A673 (cell line): ENCODE measurements at regions of chr7 and their contacts with region 1.

Region 1: GRCh38 chr7:84139986-84140729 is 54.4 kb downstream of the SEMA3A start:
- DNase-seq: peak; percentile 45
- H3K4me3 ChIP-seq: no peak overlapping the region
- H3K27ac ChIP-seq: peak overlapping the region; percentile 94
- H3K4me1 ChIP-seq: peaks cover 72% of the 10 kb centered on the region
- H3K27me3 ChIP-seq: no peaks in the 10 kb centered on the region
- CTCF ChIP-seq: no peak

Region 2: GRCh38 chr7:83976295-83976694 is 163.9 kb before region 1 on chr7:
- CTCF ChIA-PET with region 1: no interaction called
- POLR2A ChIA-PET with region 1: no interaction called
- intact Hi-C with region 1: loop called (anchors 1 kb)
- DNase-seq: peak; percentile 80
- H3K4me3 ChIP-seq: no peak overlapping the region
- H3K27ac ChIP-seq: no peak overlapping the region
- H3K4me1 ChIP-seq: peaks cover 33% of the 10 kb centered on the region
- H3K27me3 ChIP-seq: no peaks in the 10 kb centered on the region
- CTCF ChIP-seq: peak; percentile 73

Region 3: DNA sequence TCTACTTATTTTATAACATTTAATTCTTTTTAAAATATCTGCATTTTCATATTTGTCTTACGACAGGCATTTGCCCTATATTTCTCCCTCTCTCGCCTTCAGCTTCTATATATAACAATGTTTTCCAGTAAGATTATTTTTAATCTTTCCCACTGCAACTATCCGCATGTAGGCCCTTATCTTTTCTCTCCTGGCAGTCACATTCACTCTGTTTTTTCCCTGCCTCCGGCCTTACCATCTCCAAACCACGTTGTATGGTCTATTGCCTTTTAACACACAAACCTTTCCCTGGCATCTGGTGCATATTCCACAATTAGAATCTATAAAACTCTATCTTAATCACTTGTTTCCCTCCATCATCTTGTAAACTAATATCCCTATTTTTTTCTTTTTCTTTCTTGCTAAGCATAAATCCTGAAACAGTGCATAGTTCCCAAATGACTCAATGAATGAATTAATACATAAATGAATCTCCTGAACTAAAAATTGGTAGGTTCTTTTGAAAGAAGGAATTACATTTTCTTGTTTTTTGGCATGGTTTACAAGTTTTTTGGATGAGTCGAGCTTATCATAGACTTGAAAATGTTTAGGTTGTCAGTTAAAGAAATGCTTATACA is 118.8 kb before region 1 on chr7:
- CTCF ChIA-PET with region 1: no interaction called
- POLR2A ChIA-PET with region 1: no interaction called
- intact Hi-C with region 1: no loop called
- DNase-seq: no peak
- H3K4me3 ChIP-seq: no peak overlapping the region
- H3K27ac ChIP-seq: peak overlapping the region; percentile 15
- H3K4me1 ChIP-seq: peaks cover 22% of the 10 kb centered on the region
- H3K27me3 ChIP-seq: no peaks in the 10 kb centered on the region
- CTCF ChIP-seq: no peak

Region 4: DNA sequence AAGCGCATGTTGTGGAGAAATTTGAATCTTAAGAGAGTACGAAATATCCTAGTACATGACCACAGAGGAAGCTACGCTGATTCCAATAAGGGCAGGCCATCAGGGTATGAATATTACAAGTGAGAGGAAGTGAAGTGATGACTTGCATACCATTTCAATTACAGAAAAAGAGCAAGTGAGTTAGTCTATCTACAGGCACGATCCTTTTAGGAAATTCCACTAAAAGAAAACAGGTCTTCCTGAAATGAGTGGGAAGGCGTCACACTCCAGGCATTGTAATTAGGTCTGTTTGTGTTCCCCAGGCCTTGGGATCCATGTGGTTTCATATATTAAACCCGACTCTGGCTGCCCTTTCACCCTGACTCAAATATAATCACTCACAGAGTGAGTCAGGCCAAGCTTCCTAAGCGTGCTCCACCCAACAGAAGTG is 98.0 kb before region 1 on chr7:
- CTCF ChIA-PET with region 1: no interaction called
- POLR2A ChIA-PET with region 1: interaction called, 4 read pairs
- intact Hi-C with region 1: loop called (anchors 10 kb)
- DNase-seq: peak; percentile 90
- H3K4me3 ChIP-seq: peak overlapping the region; percentile 2
- H3K27ac ChIP-seq: peak overlapping the region; percentile 84
- H3K4me1 ChIP-seq: peaks cover 68% of the 10 kb centered on the region
- H3K27me3 ChIP-seq: no peaks in the 10 kb centered on the region
- CTCF ChIP-seq: no peak

Region 5: GRCh38 chr7:84070770-84071169 is 69.4 kb before region 1 on chr7:
- CTCF ChIA-PET with region 1: no interaction called
- POLR2A ChIA-PET with region 1: no interaction called
- intact Hi-C with region 1: loop called (anchors 2 kb)
- DNase-seq: peak; percentile 81
- H3K4me3 ChIP-seq: no peak overlapping the region
- H3K27ac ChIP-seq: peak overlapping the region; percentile 88
- H3K4me1 ChIP-seq: peaks cover 59% of the 10 kb centered on the region
- H3K27me3 ChIP-seq: no peaks in the 10 kb centered on the region
- CTCF ChIP-seq: no peak

Region 6: GRCh38 chr7:84092207-84092606 is 48.0 kb before region 1 on chr7:
- CTCF ChIA-PET with region 1: no interaction called
- POLR2A ChIA-PET with region 1: interaction called, 10 read pairs
- intact Hi-C with region 1: no loop called
- DNase-seq: peak; percentile 86
- H3K4me3 ChIP-seq: peak overlapping the region; percentile 9
- H3K27ac ChIP-seq: peak overlapping the region; percentile 71
- H3K4me1 ChIP-seq: peaks cover 42% of the 10 kb centered on the region
- H3K27me3 ChIP-seq: no peaks in the 10 kb centered on the region
- CTCF ChIP-seq: no peak

Region 7: GRCh38 chr7:84188786-84189405 is 48.7 kb after region 1 on chr7:
- CTCF ChIA-PET with region 1: interaction called, 4 read pairs
- POLR2A ChIA-PET with region 1: no interaction called
- intact Hi-C with region 1: loop called (anchors 1 kb)
- DNase-seq: peak; percentile 78
- H3K4me3 ChIP-seq: no peak overlapping the region
- H3K27ac ChIP-seq: no peak overlapping the region
- H3K4me1 ChIP-seq: peaks cover 47% of the 10 kb centered on the region
- H3K27me3 ChIP-seq: no peaks in the 10 kb centered on the region
- CTCF ChIP-seq: peak; percentile 79

Region 8: GRCh38 chr7:85023045-85023712 is 883.0 kb after region 1 on chr7:
- CTCF ChIA-PET with region 1: no interaction called
- POLR2A ChIA-PET with region 1: no interaction called
- intact Hi-C with region 1: loop called (anchors 2 kb)
- DNase-seq: peak; percentile 76
- H3K4me3 ChIP-seq: no peak overlapping the region
- H3K27ac ChIP-seq: no peak overlapping the region
- H3K4me1 ChIP-seq: no peaks in the 10 kb centered on the region
- H3K27me3 ChIP-seq: no peaks in the 10 kb centered on the region
- CTCF ChIP-seq: peak; percentile 70